ENCODE measurements at regions of chr7 and their contacts with region 1.

Region 1: GRCh38 chr7:73718905-73719805 is at the start of gene STX1A:
- DNase-seq: peak in 1 of 2 experiments; percentile 83
- H3K4me3 ChIP-seq: peak within 1 kb of the TSS; percentile 82
- H3K27ac ChIP-seq: peak within 1 kb of the TSS; percentile 86
- H3K4me1 ChIP-seq: peaks cover 54% of the 10 kb centered on the region
- H3K27me3 ChIP-seq: no peaks in the 10 kb centered on the region
- CTCF ChIP-seq: no peak
- total RNA-seq, gene STX1A: 39.1 and 40.5 TPM in 2 replicates

Region 2: GRCh38 chr7:73556208-73557107 is 162.7 kb before region 1 on chr7:
- CTCF ChIA-PET with region 1: interaction called, 3 read pairs
- POLR2A ChIA-PET with region 1: interaction called, 4 read pairs
- intact Hi-C with region 1: loop called (anchors 1 kb)
- DNase-seq: no peak
- H3K4me3 ChIP-seq: peak overlapping the region; percentile 68
- H3K27ac ChIP-seq: peak overlapping the region; percentile 28
- H3K4me1 ChIP-seq: peaks cover 24% of the 10 kb centered on the region
- H3K27me3 ChIP-seq: no peaks in the 10 kb centered on the region
- CTCF ChIP-seq: no peak

Region 3: GRCh38 chr7:73606801-73607691 is 112.1 kb before region 1 on chr7:
- CTCF ChIA-PET with region 1: interaction called, 13 read pairs
- POLR2A ChIA-PET with region 1: no interaction called
- intact Hi-C with region 1: no loop called
- DNase-seq: peak in 1 of 2 experiments; percentile 59
- H3K4me3 ChIP-seq: no peak overlapping the region
- H3K27ac ChIP-seq: no peak overlapping the region
- H3K4me1 ChIP-seq: peaks cover 22% of the 10 kb centered on the region
- H3K27me3 ChIP-seq: no peaks in the 10 kb centered on the region
- CTCF ChIP-seq: peak; percentile 95

Region 4: DNA sequence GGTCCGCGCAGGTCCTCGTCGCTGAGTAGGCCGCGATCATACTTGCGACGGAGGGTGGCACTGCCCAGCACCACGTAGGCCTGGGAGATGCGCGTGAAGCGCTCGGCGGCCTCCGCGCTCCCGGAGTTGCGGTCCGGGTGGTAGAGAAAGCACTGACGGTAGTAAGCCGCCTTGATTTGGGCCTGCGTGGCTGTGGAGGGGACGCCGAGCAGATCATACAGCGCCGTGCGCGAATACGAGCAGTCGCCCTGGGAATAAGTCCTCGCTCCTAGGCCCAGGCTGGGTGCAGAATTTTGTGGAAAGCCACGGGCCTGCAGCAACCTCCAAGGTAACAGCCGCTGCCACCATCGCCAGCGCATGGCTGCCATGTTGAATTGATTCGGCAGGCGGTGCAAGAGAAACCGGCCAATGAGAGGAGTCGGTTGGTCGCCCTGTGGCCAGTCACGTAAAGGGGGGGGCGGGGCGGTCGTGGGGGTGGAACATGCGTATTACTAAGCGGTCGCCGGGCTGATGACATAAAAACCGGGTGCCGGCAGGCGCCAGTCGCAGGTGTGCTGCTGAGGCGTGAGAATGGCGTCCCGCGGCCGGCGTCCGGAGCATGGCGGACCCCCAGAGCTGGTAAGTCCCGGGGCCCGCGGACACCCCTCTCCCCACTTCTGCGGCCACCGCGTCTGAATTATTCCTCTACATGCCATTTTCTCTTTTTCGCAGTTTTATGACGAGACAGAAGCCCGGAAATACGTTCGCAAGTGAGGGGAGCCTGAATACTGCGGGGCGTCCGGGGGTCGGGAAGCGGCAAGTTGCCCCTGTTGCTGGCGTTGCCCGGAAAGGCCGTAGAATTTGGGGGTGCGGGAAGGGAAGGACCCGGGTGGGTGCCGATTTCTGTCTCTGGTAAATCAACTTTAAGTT is 35.8 kb before region 1 on chr7 and contains the starts of genes BUD23 and DNAJC30:
- CTCF ChIA-PET with region 1: no interaction called
- POLR2A ChIA-PET with region 1: no interaction called
- intact Hi-C with region 1: loop called (anchors 2 kb)
- DNase-seq: peak; percentile 85 to 92
- H3K4me3 ChIP-seq: peak within 1 kb of the TSS; percentile 97
- H3K27ac ChIP-seq: peak within 1 kb of the TSS; percentile 57
- H3K4me1 ChIP-seq: peaks cover 17% of the 10 kb centered on the region
- H3K27me3 ChIP-seq: no peaks in the 10 kb centered on the region
- CTCF ChIP-seq: no peak
- total RNA-seq, gene BUD23: 122 and 158 TPM in 2 replicates
- total RNA-seq, gene DNAJC30: 8.0 and 9.5 TPM in 2 replicates

Region 5: DNA sequence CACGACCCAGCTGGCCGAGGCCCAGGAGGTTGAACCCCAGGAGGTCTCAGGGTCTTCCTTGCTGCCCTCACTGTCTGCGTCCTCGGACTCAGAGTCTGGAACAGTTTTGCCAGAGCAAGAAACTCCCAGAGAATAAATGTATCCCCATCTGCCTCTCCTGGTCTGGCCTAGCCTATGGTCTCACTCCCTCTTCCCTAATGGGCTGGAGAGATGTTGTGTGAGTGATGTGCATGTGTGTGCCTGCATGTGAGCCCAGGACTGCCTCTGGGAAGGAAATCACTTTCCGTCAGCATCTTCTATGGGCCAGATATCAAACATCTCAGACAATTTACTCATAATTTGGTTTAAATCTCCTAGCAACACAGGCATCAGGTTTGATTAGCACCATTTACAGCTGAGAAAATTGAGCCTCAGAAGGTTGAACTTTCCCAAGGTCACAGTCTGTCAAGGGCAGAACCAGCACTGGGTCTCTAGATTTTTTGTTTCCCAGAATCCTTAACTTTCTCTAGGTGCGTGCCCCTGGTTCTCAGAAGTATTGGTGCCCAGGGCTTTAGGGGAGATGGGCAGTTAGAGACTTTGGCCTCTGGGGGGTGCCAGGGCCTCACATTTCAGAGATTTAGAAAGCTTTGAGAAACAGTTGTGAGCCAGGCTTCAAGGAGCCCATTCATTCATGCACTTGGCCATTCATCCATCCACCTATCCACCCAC is 146.7 kb after region 1 on chr7:
- CTCF ChIA-PET with region 1: no interaction called
- POLR2A ChIA-PET with region 1: interaction called, 19 read pairs
- intact Hi-C with region 1: no loop called
- DNase-seq: peak in 1 of 2 experiments; percentile 57
- H3K4me3 ChIP-seq: no peak overlapping the region
- H3K27ac ChIP-seq: no peak overlapping the region
- H3K4me1 ChIP-seq: no peaks in the 10 kb centered on the region
- H3K27me3 ChIP-seq: no peaks in the 10 kb centered on the region
- CTCF ChIP-seq: peak; percentile 78

Measured in PC-9 (cell line).